Naive thymus-derived CD4-positive, alpha-beta T cell (primary cell): ENCODE measurements at regions of chr2 and their contacts with region 1.

Region 1: GRCh38 chr2:119366649-119367471 is at the starts of genes C2orf76 and DBI:
- DNase-seq: peak; percentile 82 to 94 (median 89)
- ATAC-seq: peak; percentile 97
- H3K4me3 ChIP-seq: peak within 1 kb of the TSS; percentile 80
- H3K4me3 Mint-ChIP-seq: peak within 1 kb of the TSS; percentile 79 to 99 (median 94)
- H3K27ac ChIP-seq: peak within 1 kb of the TSS; percentile 86
- H3K27ac Mint-ChIP-seq: peak within 1 kb of the TSS; percentile 78 to 97 (median 92)
- H3K4me1 ChIP-seq: peaks cover 10 to 19% of the 10 kb centered on the region in 2 donors
- H3K4me1 Mint-ChIP-seq: peaks cover 37 to 64% (median 47%) of the 10 kb centered on the region in 7 donors
- H3K27me3 ChIP-seq: no peaks in the 10 kb centered on the region
- H3K27me3 Mint-ChIP-seq: no peaks in the 10 kb centered on the region
- total RNA-seq, gene C2orf76: 5.1 to 9.2 (median 8.5) TPM
- total RNA-seq, gene DBI: 29.3 to 111 (median 42.7) TPM

Region 2: GRCh38 chr2:117814417-117815264 is 1552.2 kb before region 1 on chr2 and contains the start of gene DDX18:
- CTCF ChIA-PET with region 1: no interaction called
- POLR2A ChIA-PET with region 1: interaction called, 3 read pairs
- intact Hi-C with region 1: loop called (anchors 1 to 2 kb)
- DNase-seq: peak; percentile 91 to 99 (median 99)
- ATAC-seq: peak; percentile 94
- H3K4me3 ChIP-seq: peak within 1 kb of the TSS; percentile 79
- H3K4me3 Mint-ChIP-seq: peak within 1 kb of the TSS; percentile 88 to 95 (median 93)
- H3K27ac ChIP-seq: peak within 1 kb of the TSS; percentile 96
- H3K27ac Mint-ChIP-seq: peak within 1 kb of the TSS; percentile 94 to 100 (median 98)
- H3K4me1 ChIP-seq: peaks cover 14 to 24% of the 10 kb centered on the region in 2 donors
- H3K4me1 Mint-ChIP-seq: peaks cover 26 to 59% (median 52%) of the 10 kb centered on the region in 7 donors
- H3K27me3 ChIP-seq: no peaks in the 10 kb centered on the region
- H3K27me3 Mint-ChIP-seq: peaks cover 0 to 8% (median 0%) of the 10 kb centered on the region in 5 donors
- total RNA-seq, gene DDX18: 86.9 to 133 (median 111) TPM

Region 3: DNA sequence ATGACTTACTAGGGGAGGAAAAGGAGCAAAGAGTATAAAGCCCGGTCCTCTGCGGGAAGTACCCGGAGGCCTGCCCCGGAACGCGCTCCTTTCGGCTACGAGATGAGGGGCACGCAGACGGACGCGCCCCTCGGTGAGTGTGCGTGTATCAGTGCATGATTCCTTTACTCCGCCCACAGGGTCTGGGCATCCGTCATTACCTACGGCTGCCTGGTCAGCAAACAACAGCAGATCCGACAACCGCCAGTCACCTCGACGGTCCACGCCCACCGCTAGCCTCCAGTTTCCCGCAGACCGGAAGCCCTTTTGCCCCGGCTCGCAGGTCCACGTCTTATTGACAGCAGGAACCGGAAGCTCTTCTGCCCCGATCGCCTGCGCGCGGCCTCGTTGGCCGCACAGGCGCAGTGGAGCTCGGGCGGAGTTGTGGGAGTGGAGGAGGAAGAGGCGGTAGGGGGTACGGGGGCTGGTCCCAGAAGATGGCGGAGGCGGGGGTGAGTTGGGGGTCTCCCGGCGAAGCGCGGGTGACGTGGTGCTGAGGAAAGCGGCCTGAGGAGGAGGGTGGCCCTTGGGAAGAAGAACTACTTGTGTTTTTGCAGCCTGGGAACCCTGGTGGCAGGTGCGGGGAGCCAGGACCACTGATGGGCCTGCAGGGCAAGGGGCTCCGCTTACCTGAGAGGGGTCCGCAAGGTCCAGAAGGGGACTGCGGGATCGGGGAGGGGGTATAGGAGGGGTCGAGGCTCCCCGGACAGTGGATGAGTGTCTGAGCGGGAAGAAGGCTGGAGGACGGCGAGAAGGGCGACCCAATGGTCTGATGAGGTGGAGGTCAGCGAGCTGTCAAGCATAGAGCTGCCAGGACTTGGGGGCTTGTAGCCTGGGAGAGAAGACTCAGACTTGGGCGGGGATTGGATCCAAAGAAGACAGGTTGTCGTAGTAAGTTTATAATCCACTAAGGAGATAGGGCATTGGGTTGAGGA is 1278.5 kb before region 1 on chr2 and contains the start of gene INSIG2:
- CTCF ChIA-PET with region 1: no interaction called
- POLR2A ChIA-PET with region 1: no interaction called
- intact Hi-C with region 1: loop called in 1 of 2 experiments (anchors 2 kb)
- DNase-seq: peak; percentile 77 to 92 (median 81)
- ATAC-seq: peak; percentile 93
- H3K4me3 ChIP-seq: peak within 1 kb of the TSS; percentile 92
- H3K4me3 Mint-ChIP-seq: peak within 1 kb of the TSS; percentile 63 to 96 (median 92)
- H3K27ac ChIP-seq: peak within 1 kb of the TSS; percentile 87
- H3K27ac Mint-ChIP-seq: peak within 1 kb of the TSS; percentile 70 to 97 (median 91)
- H3K4me1 ChIP-seq: peaks cover 0 to 7% of the 10 kb centered on the region in 2 donors
- H3K4me1 Mint-ChIP-seq: peaks cover 6 to 37% (median 24%) of the 10 kb centered on the region in 7 donors
- H3K27me3 ChIP-seq: no peaks in the 10 kb centered on the region
- H3K27me3 Mint-ChIP-seq: peaks cover 0 to 12% (median 0%) of the 10 kb centered on the region in 5 donors
- total RNA-seq, gene INSIG2: 8.5 to 31.5 (median 20.3) TPM

Region 4: GRCh38 chr2:118221666-118222594 is 1144.9 kb before region 1 on chr2:
- CTCF ChIA-PET with region 1: no interaction called
- POLR2A ChIA-PET with region 1: interaction called, 4 read pairs
- intact Hi-C with region 1: loop called in 1 of 2 experiments (anchors 10 kb)
- DNase-seq: peak in 8 of 9 donors; percentile 27 to 65 (median 52)
- ATAC-seq: peak; percentile 82
- H3K4me3 ChIP-seq: no peak overlapping the region
- H3K4me3 Mint-ChIP-seq: peak overlapping the region in 5 of 10 donors; percentile 20 to 88 (median 85)
- H3K27ac ChIP-seq: no peak overlapping the region
- H3K27ac Mint-ChIP-seq: peak overlapping the region in 1 of 9 donors; percentile 67
- H3K4me1 ChIP-seq: peaks cover 8 to 13% of the 10 kb centered on the region in 2 donors
- H3K4me1 Mint-ChIP-seq: peaks cover 12 to 34% (median 24%) of the 10 kb centered on the region in 7 donors
- H3K27me3 ChIP-seq: peaks cover 10 to 39% of the 10 kb centered on the region in 2 donors
- H3K27me3 Mint-ChIP-seq: peaks cover 68 to 79% (median 69%) of the 10 kb centered on the region in 5 donors

Region 5: GRCh38 chr2:119338826-119339561 is 27.9 kb before region 1 on chr2:
- CTCF ChIA-PET with region 1: no interaction called
- POLR2A ChIA-PET with region 1: interaction called, 3 read pairs
- intact Hi-C with region 1: loop called (anchors 1 to 2 kb)
- DNase-seq: peak in 6 of 9 donors; percentile 11 to 49 (median 40)
- ATAC-seq: peak; percentile 98
- H3K4me3 ChIP-seq: no peak overlapping the region
- H3K4me3 Mint-ChIP-seq: peak overlapping the region in 9 of 10 donors; percentile 5 to 76 (median 52)
- H3K27ac ChIP-seq: no peak overlapping the region
- H3K27ac Mint-ChIP-seq: peak overlapping the region in 8 of 9 donors; percentile 5 to 91 (median 56)
- H3K4me1 ChIP-seq: peaks cover 10% of the 10 kb centered on the region in 2 donors
- H3K4me1 Mint-ChIP-seq: peaks cover 14 to 22% (median 20%) of the 10 kb centered on the region in 7 donors
- H3K27me3 ChIP-seq: no peaks in the 10 kb centered on the region
- H3K27me3 Mint-ChIP-seq: no peaks in the 10 kb centered on the region

Region 6: DNA sequence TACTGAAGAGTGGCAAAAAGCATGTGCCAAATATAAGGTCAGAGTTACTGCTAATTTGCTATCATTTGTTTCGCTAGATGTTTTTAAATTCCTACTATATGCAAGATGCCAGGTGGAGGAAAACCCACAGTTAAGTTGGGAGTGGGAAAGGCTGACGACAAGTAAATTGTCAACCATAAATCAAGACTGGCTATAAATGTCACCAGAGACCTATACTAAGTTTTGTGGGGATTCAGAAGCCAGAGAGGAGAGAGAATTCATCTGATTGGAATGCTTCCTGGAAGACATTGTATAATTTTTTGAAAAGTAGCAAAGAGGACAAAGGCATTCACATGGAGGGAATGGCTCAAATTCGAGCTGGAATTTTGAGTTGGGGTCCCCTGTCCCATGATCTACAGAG is 241.7 kb after region 1 on chr2:
- CTCF ChIA-PET with region 1: no interaction called
- POLR2A ChIA-PET with region 1: no interaction called
- intact Hi-C with region 1: no loop called
- DNase-seq: no peak
- ATAC-seq: no peak
- H3K4me3 ChIP-seq: no peak overlapping the region
- H3K4me3 Mint-ChIP-seq: no peak overlapping the region
- H3K27ac ChIP-seq: no peak overlapping the region
- H3K27ac Mint-ChIP-seq: no peak overlapping the region
- H3K4me1 ChIP-seq: no peaks in the 10 kb centered on the region
- H3K4me1 Mint-ChIP-seq: no peaks in the 10 kb centered on the region
- H3K27me3 ChIP-seq: no peaks in the 10 kb centered on the region
- H3K27me3 Mint-ChIP-seq: peaks cover 15 to 55% (median 36%) of the 10 kb centered on the region in 5 donors

Region 7: DNA sequence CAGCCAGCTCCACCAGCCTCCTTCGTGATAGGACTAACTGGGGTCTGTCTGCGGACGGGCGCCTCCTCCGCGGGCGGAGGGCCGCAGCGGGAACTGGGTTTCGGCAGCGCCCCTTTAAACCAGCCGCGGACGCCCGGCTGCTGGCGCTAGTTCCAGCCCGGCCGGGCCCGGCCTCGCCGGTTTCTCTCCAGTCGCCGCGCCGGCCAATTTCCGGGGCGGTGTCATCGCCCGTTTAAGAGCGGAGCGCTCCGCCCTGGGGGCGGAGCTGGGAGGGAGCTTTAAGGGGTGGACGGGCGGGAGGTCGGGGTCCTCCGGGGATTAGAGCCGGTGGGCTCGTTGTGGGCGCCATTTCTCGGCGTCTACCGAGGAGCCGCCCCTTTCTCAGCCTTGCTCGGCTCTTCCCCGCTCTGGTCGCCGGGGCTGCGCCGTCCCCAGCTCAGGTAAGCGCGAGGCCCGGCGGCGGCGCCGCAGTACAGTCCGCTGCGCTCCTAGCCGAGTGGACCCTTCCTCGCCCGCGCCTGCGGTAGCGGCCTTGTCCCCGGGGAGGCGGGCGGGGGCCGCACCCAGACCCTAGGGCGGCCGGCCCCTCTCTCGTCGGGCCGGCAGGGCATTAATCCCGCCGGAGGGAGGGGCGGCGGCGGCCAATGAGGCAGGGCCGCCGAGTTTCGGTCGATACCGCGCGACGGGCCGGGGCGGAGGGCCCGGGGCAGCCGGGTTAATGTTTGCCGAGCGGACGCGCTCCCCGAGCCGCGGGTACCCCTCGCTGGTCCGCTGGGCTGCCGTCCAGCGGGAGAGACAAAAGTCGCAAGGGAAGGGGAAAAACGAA is 646.1 kb after region 1 on chr2 and contains the start of gene EPB41L5:
- CTCF ChIA-PET with region 1: no interaction called
- POLR2A ChIA-PET with region 1: no interaction called
- intact Hi-C with region 1: loop called in 1 of 2 experiments (anchors 5 kb)
- DNase-seq: peak; percentile 56 to 81 (median 67)
- ATAC-seq: peak; percentile 93
- H3K4me3 ChIP-seq: peak within 1 kb of the TSS; percentile 69
- H3K4me3 Mint-ChIP-seq: peak within 1 kb of the TSS; percentile 73 to 89 (median 86)
- H3K27ac ChIP-seq: peak within 1 kb of the TSS; percentile 70
- H3K27ac Mint-ChIP-seq: peak within 1 kb of the TSS in 8 of 9 donors; percentile 36 to 75 (median 70)
- H3K4me1 ChIP-seq: peaks cover 6% of the 10 kb centered on the region in 2 donors
- H3K4me1 Mint-ChIP-seq: peaks cover 8 to 37% (median 24%) of the 10 kb centered on the region in 7 donors
- H3K27me3 ChIP-seq: no peaks in the 10 kb centered on the region
- H3K27me3 Mint-ChIP-seq: peaks cover 0 to 20% (median 0%) of the 10 kb centered on the region in 5 donors
- total RNA-seq, gene EPB41L5: 2.2 to 9.3 (median 6.8) TPM

Region 8: GRCh38 chr2:120252225-120253021 is 885.6 kb after region 1 on chr2 and contains the start of gene RALB:
- CTCF ChIA-PET with region 1: no interaction called
- POLR2A ChIA-PET with region 1: no interaction called
- intact Hi-C with region 1: loop called in 1 of 2 experiments (anchors 2 kb)
- DNase-seq: peak; percentile 95 to 99 (median 97)
- ATAC-seq: peak; percentile 95
- H3K4me3 ChIP-seq: peak within 1 kb of the TSS; percentile 81
- H3K4me3 Mint-ChIP-seq: peak within 1 kb of the TSS; percentile 94 to 100 (median 98)
- H3K27ac ChIP-seq: peak within 1 kb of the TSS; percentile 76
- H3K27ac Mint-ChIP-seq: peak within 1 kb of the TSS; percentile 87 to 98 (median 95)
- H3K4me1 ChIP-seq: peaks cover 16% of the 10 kb centered on the region in 2 donors
- H3K4me1 Mint-ChIP-seq: peaks cover 29 to 72% (median 51%) of the 10 kb centered on the region in 7 donors
- H3K27me3 ChIP-seq: no peaks in the 10 kb centered on the region
- H3K27me3 Mint-ChIP-seq: peaks cover 0 to 9% (median 4%) of the 10 kb centered on the region in 5 donors
- total RNA-seq, gene RALB: 8.7 to 119 (median 11.6) TPM